ENCODE measurements at regions of chr18 and their contacts with region 1.

Region 1: DNA sequence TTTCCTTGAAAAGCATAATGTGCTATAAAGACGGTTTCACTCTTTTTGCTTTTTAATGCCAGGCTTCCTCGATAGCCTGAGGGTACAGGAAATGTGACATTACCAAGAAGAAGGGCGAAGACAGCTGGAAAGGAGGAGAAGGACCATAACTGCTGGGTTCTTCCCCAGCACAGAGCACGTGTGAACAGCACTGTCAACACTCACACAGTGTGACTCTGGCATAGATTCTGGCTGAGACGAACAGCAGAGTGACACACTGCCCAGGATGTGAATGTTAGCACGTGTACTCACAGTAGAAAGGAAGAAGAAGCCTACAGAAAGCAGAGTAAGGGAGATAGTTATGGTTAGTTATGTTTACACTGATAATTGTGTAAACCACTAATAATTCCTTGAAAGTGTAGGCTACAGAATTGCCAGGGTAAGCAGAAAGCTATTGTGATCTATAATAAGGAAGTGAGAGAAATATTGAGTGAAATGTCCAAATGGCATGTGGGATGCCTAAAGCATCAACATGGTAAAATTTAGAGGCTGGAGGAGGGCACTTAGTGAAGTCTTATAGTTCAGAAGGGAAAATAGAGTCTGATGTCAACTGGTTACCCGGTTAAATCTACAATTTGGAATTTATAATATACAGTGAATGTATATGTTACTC is 198.2 kb downstream of the DLGAP1 start:
- DNase-seq: peak; percentile 81
- H3K4me3 ChIP-seq: no peak overlapping the region
- H3K27ac ChIP-seq: peak overlapping the region; percentile 61
- H3K4me1 ChIP-seq: peaks cover 69% of the 10 kb centered on the region
- H3K27me3 ChIP-seq: no peaks in the 10 kb centered on the region
- CTCF ChIP-seq: no peak

Region 2: GRCh38 chr18:4106407-4107033 is 150.4 kb before region 1 on chr18:
- CTCF ChIA-PET with region 1: interaction called, 16 read pairs
- POLR2A ChIA-PET with region 1: no interaction called
- intact Hi-C with region 1: loop called (anchors 5 kb)
- DNase-seq: peak; percentile 87
- H3K4me3 ChIP-seq: no peak overlapping the region
- H3K27ac ChIP-seq: no peak overlapping the region
- H3K4me1 ChIP-seq: peaks cover 10% of the 10 kb centered on the region
- H3K27me3 ChIP-seq: no peaks in the 10 kb centered on the region
- CTCF ChIP-seq: peak; percentile 92

Measured in A673 (cell line).